ENCODE measurements at regions of chr18 and their contacts with region 1.

Region 1: DNA sequence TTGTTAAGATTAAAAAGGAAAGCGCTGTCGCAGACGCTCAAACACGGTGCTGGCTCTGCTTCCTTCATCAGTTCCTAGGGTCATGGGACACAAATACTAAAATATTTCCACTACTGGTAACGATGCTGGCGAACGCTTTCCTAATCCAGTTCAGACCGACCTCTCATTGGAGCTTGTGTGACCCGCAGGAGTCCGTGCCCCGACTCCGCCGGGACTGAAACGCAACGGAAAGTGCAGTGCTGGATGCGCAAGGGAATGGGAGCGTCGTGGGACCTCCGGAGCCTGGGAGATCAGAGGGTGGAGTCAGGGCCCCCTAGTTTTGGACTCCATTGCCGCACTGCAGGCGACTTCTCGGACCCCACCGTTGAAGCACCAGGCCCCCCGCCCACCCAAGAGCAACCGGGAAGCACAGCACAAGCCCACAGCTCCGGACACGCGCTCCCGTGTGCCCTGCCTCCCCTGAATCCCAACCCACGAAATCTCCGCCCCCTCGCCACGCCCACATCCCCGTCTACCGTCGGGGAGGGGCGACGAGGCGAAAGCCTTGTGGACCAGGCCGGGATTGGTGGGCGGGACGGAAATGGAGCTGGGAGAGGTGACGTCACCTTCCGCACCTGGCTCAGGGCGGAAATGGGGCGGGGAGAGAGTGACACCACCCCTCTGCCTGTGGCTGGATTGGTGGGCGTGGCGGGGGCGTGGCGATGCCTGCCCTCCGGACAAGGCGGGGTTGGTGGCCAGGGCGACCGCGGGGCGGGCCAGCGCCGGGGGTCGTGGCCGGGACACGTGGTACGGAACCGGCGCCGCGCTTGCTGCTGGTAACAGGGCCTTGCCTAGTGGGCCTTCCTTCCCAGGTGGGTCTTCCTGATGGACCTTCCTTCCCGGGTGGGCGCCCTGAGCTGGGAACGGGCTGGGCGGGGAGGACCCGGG is at the start of gene CNDP2:
- DNase-seq: peak; percentile 96 to 98 (median 97)
- H3K4me3 ChIP-seq: peak within 1 kb of the TSS; percentile 67 to 89 (median 86)
- H3K4me3 Mint-ChIP-seq: peak within 1 kb of the TSS; percentile 95
- H3K27ac ChIP-seq: peak within 1 kb of the TSS; percentile 82 to 90
- H3K27ac Mint-ChIP-seq: peak within 1 kb of the TSS; percentile 87 to 98 (median 96)
- H3K4me1 ChIP-seq: peaks cover 41 to 50% of the 10 kb centered on the region in 2 donors
- H3K4me1 Mint-ChIP-seq: peaks cover 45% of the 10 kb centered on the region
- H3K27me3 ChIP-seq: no peaks in the 10 kb centered on the region
- H3K27me3 Mint-ChIP-seq: peaks cover 0 to 3% (median 2%) of the 10 kb centered on the region in 3 donors
- CTCF ChIP-seq: no peak
- polyA plus RNA-seq, gene CNDP2: 103 to 186 (median 122) TPM

Region 2: DNA sequence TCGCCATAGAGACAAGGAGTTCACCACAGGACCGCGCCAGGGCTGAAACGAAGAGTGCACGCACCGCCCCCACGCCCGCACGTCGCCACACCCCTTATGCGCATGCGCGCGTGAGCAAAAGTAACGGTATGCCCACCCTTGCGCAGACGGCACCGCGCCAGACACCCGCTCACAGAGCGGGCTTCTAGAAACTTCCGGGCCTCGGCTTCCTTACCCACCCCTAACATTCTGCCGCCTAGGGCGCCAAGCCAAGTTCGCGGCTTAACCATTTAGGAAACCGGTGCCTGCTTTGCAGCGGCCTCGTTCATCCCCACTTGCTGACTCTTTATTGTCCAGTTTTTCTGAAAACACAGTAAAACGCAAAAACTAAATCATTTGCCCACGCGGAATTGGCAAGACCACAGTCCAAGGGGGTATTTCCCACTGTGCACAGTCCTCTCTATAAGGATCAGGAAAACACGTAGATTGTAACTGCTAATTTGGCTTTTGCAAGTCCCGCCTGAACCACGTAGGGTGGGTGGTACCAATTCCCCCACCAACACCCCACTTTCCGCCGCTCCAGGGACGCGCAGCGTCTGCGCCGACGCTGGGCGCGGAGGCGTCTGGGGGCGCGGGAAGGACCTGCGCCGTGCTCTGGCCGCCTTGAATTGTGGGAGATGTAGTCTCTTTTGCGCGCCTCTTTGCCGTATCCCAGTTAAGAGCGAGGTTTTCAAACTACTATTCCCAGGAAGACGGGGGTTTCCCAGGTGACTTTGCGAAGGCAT is 347.9 kb before region 1 on chr18 and contains the starts of genes FBXO15 and TIMM21:
- intact Hi-C with region 1: loop called in 1 of 2 experiments (anchors 10 kb)
- DNase-seq: peak; percentile 91 to 94 (median 93)
- H3K4me3 ChIP-seq: peak within 1 kb of the TSS; percentile 86 to 94 (median 89)
- H3K4me3 Mint-ChIP-seq: peak within 1 kb of the TSS; percentile 96 to 97
- H3K27ac ChIP-seq: peak within 1 kb of the TSS; percentile 90 to 94
- H3K27ac Mint-ChIP-seq: peak within 1 kb of the TSS; percentile 95 to 99 (median 98)
- H3K4me1 ChIP-seq: peaks cover 10 to 23% of the 10 kb centered on the region in 2 donors
- H3K4me1 Mint-ChIP-seq: peaks cover 19% of the 10 kb centered on the region
- H3K27me3 ChIP-seq: no peaks in the 10 kb centered on the region
- H3K27me3 Mint-ChIP-seq: peaks cover 1 to 5% (median 4%) of the 10 kb centered on the region in 3 donors
- CTCF ChIP-seq: no peak
- polyA plus RNA-seq, gene FBXO15: not detected
- polyA plus RNA-seq, gene TIMM21: 11.0 to 15.6 (median 14.7) TPM

Region 3: GRCh38 chr18:74242438-74243096 is 253.3 kb before region 1 on chr18:
- intact Hi-C with region 1: loop called in 1 of 2 experiments (anchors 10 kb)
- DNase-seq: no peak
- H3K4me3 ChIP-seq: no peak overlapping the region
- H3K4me3 Mint-ChIP-seq: no peak overlapping the region
- H3K27ac ChIP-seq: no peak overlapping the region
- H3K27ac Mint-ChIP-seq: no peak overlapping the region
- H3K4me1 ChIP-seq: no peaks in the 10 kb centered on the region
- H3K4me1 Mint-ChIP-seq: peaks cover 5% of the 10 kb centered on the region
- H3K27me3 ChIP-seq: no peaks in the 10 kb centered on the region
- H3K27me3 Mint-ChIP-seq: peaks cover 2 to 7% (median 5%) of the 10 kb centered on the region in 3 donors
- CTCF ChIP-seq: no peak

Region 4: GRCh38 chr18:74291771-74292540 is 203.9 kb before region 1 on chr18 and contains the start of gene CYB5A:
- intact Hi-C with region 1: loop called in 1 of 2 experiments (anchors 5 kb)
- DNase-seq: peak; percentile 95 to 98 (median 95)
- H3K4me3 ChIP-seq: peak within 1 kb of the TSS; percentile 71 to 94 (median 89)
- H3K4me3 Mint-ChIP-seq: peak within 1 kb of the TSS; percentile 95 to 100
- H3K27ac ChIP-seq: peak within 1 kb of the TSS; percentile 17 to 79
- H3K27ac Mint-ChIP-seq: peak within 1 kb of the TSS; percentile 36 to 97 (median 91)
- H3K4me1 ChIP-seq: peaks cover 14 to 29% of the 10 kb centered on the region in 2 donors
- H3K4me1 Mint-ChIP-seq: peaks cover 28% of the 10 kb centered on the region
- H3K27me3 ChIP-seq: no peaks in the 10 kb centered on the region
- H3K27me3 Mint-ChIP-seq: peaks cover 0 to 4% (median 3%) of the 10 kb centered on the region in 3 donors
- CTCF ChIP-seq: no peak
- polyA plus RNA-seq, gene CYB5A: 19.0 to 27.6 (median 22.4) TPM

Region 5: GRCh38 chr18:74353169-74353775 is 142.6 kb before region 1 on chr18:
- intact Hi-C with region 1: loop called (anchors 2 to 10 kb)
- DNase-seq: peak; percentile 21 to 55 (median 30)
- H3K4me3 ChIP-seq: no peak overlapping the region
- H3K4me3 Mint-ChIP-seq: no peak overlapping the region
- H3K27ac ChIP-seq: no peak overlapping the region
- H3K27ac Mint-ChIP-seq: no peak overlapping the region
- H3K4me1 ChIP-seq: peaks cover 3 to 11% of the 10 kb centered on the region in 2 donors
- H3K4me1 Mint-ChIP-seq: peaks cover 12% of the 10 kb centered on the region
- H3K27me3 ChIP-seq: no peaks in the 10 kb centered on the region
- H3K27me3 Mint-ChIP-seq: peaks cover 0 to 3% (median 2%) of the 10 kb centered on the region in 3 donors
- CTCF ChIP-seq: peak; percentile 54

Region 6: GRCh38 chr18:74378179-74378682 is 117.6 kb before region 1 on chr18:
- intact Hi-C with region 1: no loop called
- DNase-seq: peak in 1 of 3 donors; percentile 7
- H3K4me3 ChIP-seq: no peak overlapping the region
- H3K4me3 Mint-ChIP-seq: no peak overlapping the region
- H3K27ac ChIP-seq: no peak overlapping the region
- H3K27ac Mint-ChIP-seq: peak overlapping the region in 3 of 7 donors; percentile 47 to 67 (median 51)
- H3K4me1 ChIP-seq: peaks cover 11 to 13% of the 10 kb centered on the region in 2 donors
- H3K4me1 Mint-ChIP-seq: peaks cover 15% of the 10 kb centered on the region
- H3K27me3 ChIP-seq: no peaks in the 10 kb centered on the region
- H3K27me3 Mint-ChIP-seq: peaks cover 0 to 2% (median 0%) of the 10 kb centered on the region in 3 donors
- CTCF ChIP-seq: no peak

Region 7: DNA sequence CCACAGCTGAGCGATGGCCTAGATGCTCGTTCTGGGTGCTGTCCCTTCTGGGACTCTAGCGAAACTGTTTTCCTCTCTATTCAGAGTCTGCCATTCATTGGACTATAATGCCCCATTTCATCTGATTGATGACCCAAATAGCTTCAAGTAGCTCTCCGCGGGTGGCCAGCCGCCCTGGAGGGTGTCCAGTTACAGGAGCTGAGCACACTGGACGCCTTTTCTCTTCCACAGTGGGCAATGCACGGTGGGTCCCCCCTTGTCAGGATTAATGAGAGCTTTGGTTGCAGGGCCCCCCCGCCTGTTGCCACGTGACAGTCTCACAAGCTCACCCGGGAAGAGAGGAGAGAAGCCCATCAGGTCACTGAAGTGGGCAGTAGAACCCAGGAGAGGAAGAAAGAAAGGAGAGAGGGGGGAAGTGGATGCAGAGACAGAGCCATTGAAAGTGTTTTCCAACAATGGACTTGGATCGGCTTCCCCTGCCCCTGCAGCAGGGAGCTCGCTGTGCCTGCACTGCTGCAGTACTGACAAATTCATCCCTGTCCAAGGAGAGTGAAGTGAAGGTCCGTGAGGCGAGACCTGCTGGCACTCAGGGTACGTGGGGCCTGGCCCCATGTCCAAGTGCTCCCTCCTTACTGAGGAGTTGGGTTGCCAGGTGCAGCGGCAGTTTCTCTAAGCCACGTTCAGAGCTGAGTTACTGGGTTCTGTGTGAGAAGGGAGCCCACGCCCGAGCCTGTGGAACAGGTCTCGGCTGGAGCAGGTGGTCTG is 83.5 kb before region 1 on chr18:
- intact Hi-C with region 1: no loop called
- DNase-seq: no peak
- H3K4me3 ChIP-seq: no peak overlapping the region
- H3K4me3 Mint-ChIP-seq: no peak overlapping the region
- H3K27ac ChIP-seq: no peak overlapping the region
- H3K27ac Mint-ChIP-seq: peak overlapping the region in 1 of 7 donors; percentile 42
- H3K4me1 ChIP-seq: peaks cover 9 to 11% of the 10 kb centered on the region in 2 donors
- H3K4me1 Mint-ChIP-seq: peaks cover 18% of the 10 kb centered on the region
- H3K27me3 ChIP-seq: no peaks in the 10 kb centered on the region
- H3K27me3 Mint-ChIP-seq: peaks cover 2 to 11% (median 7%) of the 10 kb centered on the region in 3 donors
- CTCF ChIP-seq: no peak

Region 8: GRCh38 chr18:74589811-74590210 is 94.0 kb after region 1 on chr18:
- intact Hi-C with region 1: loop called (anchors 2 to 10 kb)
- DNase-seq: peak; percentile 58 to 80 (median 74)
- H3K4me3 ChIP-seq: peak overlapping the region in 1 of 3 experiments; percentile 62
- H3K4me3 Mint-ChIP-seq: peak overlapping the region in 1 of 2 donors; percentile 15
- H3K27ac ChIP-seq: peak overlapping the region; percentile 87
- H3K27ac Mint-ChIP-seq: peak overlapping the region; percentile 91 to 98 (median 95)
- H3K4me1 ChIP-seq: peaks cover 55 to 65% of the 10 kb centered on the region in 2 donors
- H3K4me1 Mint-ChIP-seq: peaks cover 59% of the 10 kb centered on the region
- H3K27me3 ChIP-seq: no peaks in the 10 kb centered on the region
- H3K27me3 Mint-ChIP-seq: peaks cover 0 to 6% (median 3%) of the 10 kb centered on the region in 3 donors
- CTCF ChIP-seq: no peak

Region 9: GRCh38 chr18:74597662-74598349 is 102.0 kb after region 1 on chr18 and contains the start of gene ZNF407:
- intact Hi-C with region 1: loop called in 1 of 2 experiments (anchors 10 kb)
- DNase-seq: peak; percentile 81 to 85 (median 83)
- H3K4me3 ChIP-seq: peak within 1 kb of the TSS; percentile 85 to 97 (median 85)
- H3K4me3 Mint-ChIP-seq: peak within 1 kb of the TSS; percentile 91 to 95
- H3K27ac ChIP-seq: peak within 1 kb of the TSS; percentile 94 to 98
- H3K27ac Mint-ChIP-seq: peak within 1 kb of the TSS; percentile 96 to 99 (median 98)
- H3K4me1 ChIP-seq: peaks cover 37 to 45% of the 10 kb centered on the region in 2 donors
- H3K4me1 Mint-ChIP-seq: peaks cover 47% of the 10 kb centered on the region
- H3K27me3 ChIP-seq: no peaks in the 10 kb centered on the region
- H3K27me3 Mint-ChIP-seq: no peaks in the 10 kb centered on the region
- CTCF ChIP-seq: no peak
- polyA plus RNA-seq, gene ZNF407: 1.3 to 3.6 (median 1.6) TPM

Measured in CD14-positive monocyte (primary cell).